ENCODE measurements at regions of chr9 and their contacts with region 1.

Region 1: GRCh38 chr9:26744191-26744965 is 148.2 kb downstream of the CAAP1 start:
- DNase-seq: no peak
- H3K4me3 ChIP-seq: no peak overlapping the region
- H3K27ac ChIP-seq: no peak overlapping the region
- H3K27me3 ChIP-seq: no peaks in the 10 kb centered on the region
- CTCF ChIP-seq: peak; percentile 59 to 95 (median 78)

Region 2: GRCh38 chr9:26439061-26439624 is 305.2 kb before region 1 on chr9:
- intact Hi-C with region 1: no loop called
- DNase-seq: no peak
- H3K4me3 ChIP-seq: no peak overlapping the region
- H3K27ac ChIP-seq: no peak overlapping the region
- H3K27me3 ChIP-seq: no peaks in the 10 kb centered on the region
- CTCF ChIP-seq: no peak

Region 3: DNA sequence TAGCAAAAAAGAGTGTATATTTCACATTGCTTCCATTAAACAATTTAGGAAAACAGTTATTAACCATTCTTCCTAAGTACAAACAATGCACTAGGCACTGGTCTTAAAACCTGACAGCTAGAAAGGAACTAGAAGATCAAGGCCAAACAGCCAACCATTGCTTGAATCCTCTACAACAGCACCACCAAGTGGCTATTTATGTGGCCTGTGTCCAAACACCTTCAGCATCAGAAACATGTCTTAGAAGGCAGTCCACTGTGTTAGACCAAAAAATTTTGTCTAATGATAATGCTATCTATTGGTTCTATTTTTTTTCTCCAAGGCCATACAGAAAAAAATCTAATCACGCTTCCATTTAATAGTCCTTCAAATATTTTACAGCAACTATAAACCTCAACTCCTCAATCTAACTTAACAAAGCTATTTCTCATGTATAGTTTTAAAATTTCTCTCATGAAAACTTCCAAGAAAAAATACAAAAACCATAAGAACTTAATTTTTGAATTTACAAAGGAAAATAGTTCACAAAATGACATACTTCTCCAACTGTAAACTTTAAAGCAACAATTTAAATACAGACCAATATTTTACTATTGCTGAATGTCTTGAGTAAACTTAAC is 112.1 kb after region 1 on chr9:
- intact Hi-C with region 1: loop called in 1 of 2 experiments (anchors 5 kb)
- DNase-seq: peak in 2 of 10 donors; percentile 20 to 30
- H3K4me3 ChIP-seq: no peak overlapping the region
- H3K27ac ChIP-seq: no peak overlapping the region
- H3K27me3 ChIP-seq: no peaks in the 10 kb centered on the region
- CTCF ChIP-seq: peak in 46 of 56 donors; percentile 8 to 60 (median 36)

Region 4: DNA sequence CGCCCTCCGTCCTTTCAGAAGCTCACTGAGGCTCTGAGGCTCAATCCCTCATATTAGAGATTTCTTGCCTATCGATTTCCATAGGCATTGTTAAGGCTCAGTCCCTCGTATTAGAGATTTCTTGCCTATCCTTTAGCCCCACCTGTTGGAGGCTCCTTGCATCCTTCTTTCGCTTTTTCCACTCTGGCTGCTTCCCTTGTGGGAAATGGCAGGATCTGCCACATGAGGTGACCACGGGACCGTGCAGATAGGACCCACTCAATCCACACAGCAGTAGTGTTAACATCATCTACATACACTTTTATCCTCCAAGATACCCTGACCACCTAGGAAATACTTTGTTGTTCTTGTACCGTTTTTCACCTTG is 231.3 kb after region 1 on chr9:
- intact Hi-C with region 1: loop called in 1 of 2 experiments (anchors 5 kb)
- DNase-seq: no peak
- H3K4me3 ChIP-seq: no peak overlapping the region
- H3K27ac ChIP-seq: no peak overlapping the region
- H3K27me3 ChIP-seq: no peaks in the 10 kb centered on the region
- CTCF ChIP-seq: peak in 50 of 56 donors; percentile 20 to 71 (median 43)